IMR-90 (cell line): ENCODE measurements at regions of chr2 and their contacts with region 1.

Region 1: GRCh38 chr2:85354286-85355072 is at the starts of genes ELMOD3 and RETSAT:
- DNase-seq: peak; percentile 100
- ATAC-seq: peak; percentile 99
- H3K4me3 ChIP-seq: peak within 1 kb of the TSS; percentile 64
- H3K27ac ChIP-seq: peak within 1 kb of the TSS; percentile 87
- H3K4me1 ChIP-seq: peaks cover 6% of the 10 kb centered on the region
- H3K27me3 ChIP-seq: no peaks in the 10 kb centered on the region
- CTCF ChIP-seq: no peak
- POLR2A ChIP-seq: peak; percentile 98
- RAD21 ChIP-seq: no peak
- total RNA-seq, gene ELMOD3: 10.8 and 13.1 TPM in 2 replicates
- total RNA-seq, gene RETSAT: 25.0 and 32.3 TPM in 2 replicates

Region 2: DNA sequence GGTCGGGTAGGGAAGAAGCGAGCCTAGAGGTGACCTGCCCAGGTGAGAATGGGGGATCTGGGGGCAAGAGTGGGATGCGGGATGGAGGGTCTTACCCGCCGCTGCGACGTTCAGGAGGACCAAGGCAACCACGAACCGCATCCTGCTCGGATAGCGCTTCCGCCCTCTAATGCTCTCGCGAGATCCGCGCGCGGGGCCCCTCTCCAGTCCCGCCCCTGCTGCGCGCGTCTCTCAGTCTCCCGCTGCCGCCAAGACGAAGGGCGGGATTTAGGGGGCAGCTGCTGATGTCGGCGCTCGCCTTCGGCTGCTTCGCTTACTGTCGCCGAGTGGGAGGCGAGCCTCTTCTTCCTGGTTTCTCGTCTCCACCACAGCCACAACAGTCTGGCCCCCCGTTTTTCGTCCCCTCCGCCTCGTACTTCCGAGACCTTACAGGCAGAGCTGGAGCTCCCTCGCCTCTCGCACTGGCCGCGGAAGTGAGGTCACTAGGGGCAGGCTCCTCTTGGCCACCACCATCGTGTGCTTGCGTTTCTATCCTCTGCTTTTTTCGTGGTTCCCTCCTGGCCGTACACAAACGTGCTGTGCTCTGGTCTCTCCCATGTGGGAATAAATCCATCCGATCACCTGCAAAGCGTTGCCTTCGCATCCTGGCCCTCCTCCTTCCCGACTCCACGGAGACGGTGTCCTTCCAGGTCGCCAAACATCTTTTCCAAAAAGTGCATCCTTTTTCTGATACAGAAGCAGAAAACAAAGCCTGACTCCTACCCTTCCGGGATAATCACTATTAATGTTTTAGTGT is 26.5 kb before region 1 on chr2 and contains the start of gene TGOLN2:
- CTCF ChIA-PET with region 1: interaction called, 3 read pairs
- POLR2A ChIA-PET with region 1: interaction called, 6 read pairs
- dilution Hi-C with region 1: no loop called
- in situ Hi-C with region 1: no loop called
- intact Hi-C with region 1: loop called (anchors 1 kb)
- DNase-seq: peak; percentile 85
- ATAC-seq: peak; percentile 97
- H3K4me3 ChIP-seq: peak within 1 kb of the TSS; percentile 57
- H3K27ac ChIP-seq: peak within 1 kb of the TSS; percentile 90
- H3K4me1 ChIP-seq: peaks cover 7% of the 10 kb centered on the region
- H3K27me3 ChIP-seq: no peaks in the 10 kb centered on the region
- CTCF ChIP-seq: no peak
- POLR2A ChIP-seq: peak; percentile 97
- RAD21 ChIP-seq: no peak
- total RNA-seq, gene TGOLN2: 57.7 and 61.7 TPM in 2 replicates

Region 3: GRCh38 chr2:85390941-85391669 is 36.6 kb after region 1 on chr2:
- CTCF ChIA-PET with region 1: no interaction called
- POLR2A ChIA-PET with region 1: no interaction called
- dilution Hi-C with region 1: no loop called
- in situ Hi-C with region 1: no loop called
- intact Hi-C with region 1: no loop called
- DNase-seq: peak; percentile 23
- ATAC-seq: peak; percentile 77
- H3K4me3 ChIP-seq: no peak overlapping the region
- H3K27ac ChIP-seq: no peak overlapping the region
- H3K4me1 ChIP-seq: peaks cover 4% of the 10 kb centered on the region
- H3K27me3 ChIP-seq: no peaks in the 10 kb centered on the region
- CTCF ChIP-seq: peak; percentile 61
- POLR2A ChIP-seq: no peak
- RAD21 ChIP-seq: peak; percentile 75

Region 4: DNA sequence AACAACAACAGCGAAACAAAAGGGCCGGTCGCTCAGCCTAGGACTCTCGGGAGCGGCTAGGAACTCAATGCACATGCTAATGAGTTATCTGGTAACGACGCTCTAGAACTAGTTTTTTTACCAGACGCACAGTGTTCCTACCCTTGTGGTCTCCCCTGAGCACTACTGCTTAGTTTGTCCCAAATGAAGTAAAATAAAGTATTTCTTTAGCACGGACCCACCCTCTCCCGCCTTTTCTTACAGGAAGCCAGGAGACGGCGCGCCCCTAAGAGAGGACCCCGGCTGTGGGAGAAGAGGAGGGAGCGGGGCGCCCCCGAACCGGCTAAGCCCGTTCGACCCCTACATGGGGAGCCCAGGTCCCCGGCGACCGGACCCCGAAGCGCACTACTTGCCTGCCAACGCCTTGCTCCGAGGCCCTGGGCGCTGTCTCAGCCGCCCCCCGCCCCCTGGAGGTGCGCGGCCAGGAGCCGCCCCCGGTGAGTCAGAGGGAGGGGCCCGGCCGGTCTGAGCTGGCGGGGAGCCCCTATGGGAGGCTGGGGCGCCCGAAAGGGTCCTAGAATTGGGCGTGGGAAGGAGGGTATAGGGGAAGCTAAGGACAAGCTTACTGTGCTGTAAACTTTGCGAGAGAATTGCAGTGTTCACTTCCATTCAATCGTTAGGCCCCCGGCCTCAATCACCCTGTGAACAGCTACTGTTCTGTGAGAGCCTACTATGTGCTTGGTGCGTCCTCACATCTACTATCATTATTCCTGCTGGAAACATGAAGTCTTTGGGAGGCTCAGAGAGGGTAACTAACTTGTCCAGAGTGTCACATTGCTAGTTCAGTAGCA is 59.3 kb after region 1 on chr2:
- CTCF ChIA-PET with region 1: no interaction called
- POLR2A ChIA-PET with region 1: no interaction called
- dilution Hi-C with region 1: no loop called
- in situ Hi-C with region 1: no loop called
- intact Hi-C with region 1: loop called (anchors 2 kb)
- DNase-seq: peak; percentile 46
- ATAC-seq: peak; percentile 51
- H3K4me3 ChIP-seq: peak overlapping the region; percentile 53
- H3K27ac ChIP-seq: peak overlapping the region; percentile 20; the same call in 1 of the 2 replicates
- H3K4me1 ChIP-seq: peaks cover 9% of the 10 kb centered on the region
- H3K27me3 ChIP-seq: no peaks in the 10 kb centered on the region
- CTCF ChIP-seq: 0 out of 2 replicates have a peak, but pooled peaks have one; percentile 1
- POLR2A ChIP-seq: no peak
- RAD21 ChIP-seq: no peak

Region 5: DNA sequence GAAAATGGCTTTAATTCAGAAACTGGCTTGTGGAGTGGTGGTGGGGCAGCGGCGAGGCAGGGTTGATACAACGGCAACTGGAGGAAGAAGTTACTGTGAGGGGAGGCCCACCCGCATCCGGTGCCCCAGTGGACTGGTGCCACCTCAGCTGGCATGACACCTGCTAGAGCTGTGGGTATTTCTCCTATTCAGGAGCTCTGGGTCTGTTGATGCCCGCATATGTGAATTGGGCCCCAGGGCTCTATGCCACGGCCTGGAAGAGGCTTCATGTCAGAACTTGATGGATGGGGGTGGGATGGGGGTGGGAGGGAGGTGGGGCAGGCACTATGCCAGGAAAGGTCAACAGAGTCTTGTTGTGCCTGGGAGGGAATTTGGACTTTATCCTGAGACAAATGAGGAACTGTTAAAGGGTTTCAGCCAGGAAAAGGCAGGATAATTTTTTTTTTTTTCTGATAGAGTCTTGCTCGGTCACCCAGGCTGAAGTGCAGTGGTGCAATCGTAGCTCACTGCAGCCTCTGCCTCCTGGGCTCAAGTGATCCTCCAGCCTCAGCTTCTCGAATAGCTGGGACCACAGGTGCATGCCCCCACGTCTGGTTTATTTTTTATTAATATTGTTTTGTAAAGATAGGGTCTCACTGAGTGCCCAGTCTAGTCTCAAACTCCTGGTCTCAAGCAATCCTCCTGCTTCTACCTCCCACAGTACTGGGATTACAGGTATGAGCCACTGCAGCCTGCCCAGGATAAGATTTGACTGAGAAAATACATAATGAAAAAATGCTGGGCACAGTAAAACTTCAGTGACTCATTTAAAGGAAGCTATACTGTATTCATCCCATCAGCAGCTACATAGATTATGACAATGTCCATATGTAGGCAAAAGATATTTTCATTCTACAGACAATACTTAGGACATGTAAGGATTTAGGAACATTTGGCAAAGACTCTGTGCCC is 116.6 kb after region 1 on chr2:
- CTCF ChIA-PET with region 1: no interaction called
- POLR2A ChIA-PET with region 1: no interaction called
- dilution Hi-C with region 1: no loop called
- in situ Hi-C with region 1: no loop called
- intact Hi-C with region 1: no loop called
- DNase-seq: peak; percentile 42
- ATAC-seq: peak; percentile 46; the same call in 1 of the 2 replicates
- H3K4me3 ChIP-seq: no peak overlapping the region
- H3K27ac ChIP-seq: no peak overlapping the region
- H3K4me1 ChIP-seq: peaks cover 11% of the 10 kb centered on the region; the same call in 1 of the 2 replicates
- H3K27me3 ChIP-seq: no peaks in the 10 kb centered on the region
- CTCF ChIP-seq: no peak
- POLR2A ChIP-seq: no peak
- RAD21 ChIP-seq: no peak

Region 6: DNA sequence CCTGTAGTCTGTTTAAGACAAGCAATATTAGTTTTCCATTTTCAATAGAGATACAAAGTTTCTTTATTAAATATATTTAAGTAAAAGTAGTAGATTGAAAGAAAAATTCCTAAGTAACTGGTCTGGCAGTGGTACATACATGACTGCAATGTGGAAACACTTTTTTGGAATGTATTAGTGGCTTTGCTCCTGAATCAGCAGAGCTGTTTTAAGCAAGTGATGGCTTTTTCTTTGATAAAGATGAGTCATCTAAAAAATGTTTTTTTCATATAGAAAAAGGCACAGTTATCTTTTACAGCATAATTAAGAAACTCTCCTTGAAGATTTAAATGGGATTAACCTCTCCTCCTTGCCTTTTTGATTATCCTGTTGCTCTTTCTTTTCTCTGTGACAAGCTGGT is 1121.6 kb after region 1 on chr2:
- CTCF ChIA-PET with region 1: no interaction called
- POLR2A ChIA-PET with region 1: no interaction called
- dilution Hi-C with region 1: no loop called
- in situ Hi-C with region 1: no loop called
- intact Hi-C with region 1: no loop called
- DNase-seq: peak; percentile 83
- ATAC-seq: peak; percentile 67
- H3K4me3 ChIP-seq: no peak overlapping the region
- H3K27ac ChIP-seq: no peak overlapping the region
- H3K4me1 ChIP-seq: peaks cover 6% of the 10 kb centered on the region; the same call in 1 of the 2 replicates
- H3K27me3 ChIP-seq: no peaks in the 10 kb centered on the region
- CTCF ChIP-seq: no peak
- POLR2A ChIP-seq: no peak
- RAD21 ChIP-seq: no peak